ENCODE measurements at regions of chr17 and their contacts with region 1.

Region 1: GRCh38 chr17:77429919-77430752 is 289.4 kb downstream of the SEC14L1 start:
- DNase-seq: peak; percentile 83
- H3K4me3 Mint-ChIP-seq: no peak overlapping the region
- H3K27ac Mint-ChIP-seq: peak overlapping the region; percentile 60
- H3K4me1 Mint-ChIP-seq: peaks cover 94% of the 10 kb centered on the region
- H3K27me3 Mint-ChIP-seq: no peaks in the 10 kb centered on the region

Region 2: GRCh38 chr17:77287432-77288071 is 142.6 kb before region 1 on chr17:
- CTCF ChIA-PET with region 1: no interaction called
- POLR2A ChIA-PET with region 1: no interaction called
- DNase-seq: no peak
- H3K4me3 Mint-ChIP-seq: no peak overlapping the region
- H3K27ac Mint-ChIP-seq: no peak overlapping the region
- H3K4me1 Mint-ChIP-seq: peaks cover 5% of the 10 kb centered on the region
- H3K27me3 Mint-ChIP-seq: peaks cover 11% of the 10 kb centered on the region

Region 3: DNA sequence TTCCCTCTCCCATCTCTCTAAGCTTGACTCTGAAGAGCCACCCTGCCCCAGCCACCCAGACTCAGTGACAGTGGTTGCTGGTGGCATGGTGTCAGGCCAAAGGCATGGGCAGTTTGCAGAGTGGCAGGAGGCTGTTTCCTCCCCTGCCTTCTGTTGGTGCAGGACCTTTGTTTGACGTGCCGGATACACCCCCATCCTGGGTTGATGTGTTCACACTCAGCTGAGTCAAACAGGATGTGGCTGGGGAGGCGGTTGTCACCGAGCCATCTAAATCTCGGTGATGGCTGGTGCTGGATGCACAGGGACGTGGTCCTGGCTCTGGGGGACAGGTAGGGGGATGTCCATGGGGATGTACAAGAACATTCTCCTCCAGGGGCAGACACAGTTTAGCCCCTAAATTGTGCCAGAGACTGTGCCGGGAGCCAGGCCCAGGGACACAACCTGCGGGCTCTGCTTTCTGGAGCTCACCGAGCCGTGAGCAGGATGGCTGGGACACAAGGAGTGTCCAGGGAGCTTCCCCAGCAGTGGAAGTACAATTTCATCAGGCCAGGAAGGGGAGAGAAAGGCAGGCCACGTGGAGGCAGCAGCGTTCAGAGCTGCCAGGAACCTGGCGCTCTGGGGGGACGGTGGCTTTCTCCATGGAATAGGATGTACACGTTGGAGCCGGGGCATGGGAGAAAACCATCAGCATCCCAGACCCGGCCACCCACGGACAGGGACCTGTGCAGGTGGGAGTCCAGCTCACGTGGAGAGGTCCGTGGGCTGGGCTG is 25.1 kb before region 1 on chr17:
- CTCF ChIA-PET with region 1: interaction called, 14 read pairs
- POLR2A ChIA-PET with region 1: no interaction called
- DNase-seq: peak; percentile 90
- H3K4me3 Mint-ChIP-seq: peak overlapping the region; percentile 91
- H3K27ac Mint-ChIP-seq: peak overlapping the region; percentile 91
- H3K4me1 Mint-ChIP-seq: peaks cover 94% of the 10 kb centered on the region
- H3K27me3 Mint-ChIP-seq: no peaks in the 10 kb centered on the region

Region 4: DNA sequence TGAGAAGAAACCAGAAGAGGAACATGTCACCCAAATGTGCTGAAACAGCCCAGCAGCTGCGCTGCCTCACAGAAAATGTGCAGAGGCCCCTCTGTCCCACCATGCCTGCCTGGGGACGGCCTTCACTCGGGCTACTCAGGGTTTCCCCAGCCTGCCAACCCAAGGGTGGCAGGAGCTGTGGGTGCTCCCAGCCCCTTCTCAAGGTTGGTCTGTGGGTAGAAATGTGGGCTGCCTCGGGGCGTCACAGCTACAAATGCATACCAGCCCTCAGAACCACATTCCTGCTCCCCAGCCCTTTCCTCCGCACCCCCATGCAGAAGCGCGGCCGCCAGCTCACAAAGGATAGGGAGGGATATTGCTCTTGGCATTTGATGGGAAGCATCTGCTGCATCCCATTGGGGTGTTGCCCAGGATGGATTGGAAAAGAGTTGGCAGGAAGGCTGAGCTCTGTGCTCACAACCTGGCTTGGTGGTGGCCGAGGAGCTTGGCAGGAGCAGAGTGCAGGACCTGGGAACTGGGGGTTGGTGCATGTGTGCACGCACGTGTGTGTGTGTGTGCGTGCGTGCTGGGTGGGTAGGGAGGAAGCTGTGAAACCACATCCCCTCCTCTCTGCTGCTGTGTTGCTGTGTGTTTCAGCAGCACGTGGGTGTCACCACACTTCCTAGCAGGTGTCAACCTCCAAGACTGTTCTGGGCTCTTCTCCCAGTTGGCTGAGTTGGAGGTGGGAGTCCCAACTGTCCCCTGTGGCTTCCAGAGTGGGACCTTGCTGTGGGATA is 15.0 kb after region 1 on chr17:
- CTCF ChIA-PET with region 1: interaction called, 34 read pairs
- POLR2A ChIA-PET with region 1: interaction called, 4 read pairs
- DNase-seq: peak; percentile 92
- H3K4me3 Mint-ChIP-seq: peak overlapping the region; percentile 83
- H3K27ac Mint-ChIP-seq: peak overlapping the region; percentile 97
- H3K4me1 Mint-ChIP-seq: peaks cover 97% of the 10 kb centered on the region
- H3K27me3 Mint-ChIP-seq: no peaks in the 10 kb centered on the region

Region 5: DNA sequence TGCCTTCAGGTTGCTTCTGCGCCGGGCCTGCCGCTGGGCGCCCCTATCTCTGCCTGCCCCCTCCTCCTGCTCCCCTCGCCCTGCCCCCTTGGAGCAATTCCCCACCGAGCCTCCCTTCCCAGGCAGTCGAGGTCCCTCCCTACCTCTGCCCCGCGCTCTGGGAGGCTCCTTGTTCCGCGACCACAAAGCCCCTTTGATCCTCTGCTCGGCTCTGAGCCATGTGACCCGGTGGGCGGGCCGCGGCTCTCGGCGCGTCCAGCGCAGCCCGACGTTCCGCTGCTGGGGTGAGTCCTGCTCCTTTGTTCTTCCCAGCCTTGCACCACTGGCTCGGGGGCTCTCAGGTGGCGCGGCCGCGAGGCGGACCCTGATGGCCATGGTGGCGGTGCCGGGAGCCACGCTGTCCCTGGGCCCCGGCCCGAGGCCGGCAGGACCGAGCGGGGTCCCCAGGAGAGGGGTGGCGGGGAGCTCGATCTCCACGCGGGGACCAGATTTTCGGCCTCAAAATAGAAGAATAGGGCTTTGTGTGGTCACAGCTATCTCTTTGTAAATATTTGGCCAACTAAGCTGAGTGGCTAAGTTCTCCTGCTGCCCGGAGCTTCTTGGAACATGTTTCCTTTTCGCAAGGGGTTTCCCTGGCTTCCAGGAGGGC is 21.2 kb after region 1 on chr17:
- CTCF ChIA-PET with region 1: interaction called, 18 read pairs
- POLR2A ChIA-PET with region 1: no interaction called
- DNase-seq: peak; percentile 81
- H3K4me3 Mint-ChIP-seq: peak overlapping the region; percentile 95
- H3K27ac Mint-ChIP-seq: peak overlapping the region; percentile 98
- H3K4me1 Mint-ChIP-seq: peaks cover 56% of the 10 kb centered on the region
- H3K27me3 Mint-ChIP-seq: no peaks in the 10 kb centered on the region

Region 6: GRCh38 chr17:77462101-77462500 is 32.0 kb after region 1 on chr17:
- CTCF ChIA-PET with region 1: interaction called, 13 read pairs
- POLR2A ChIA-PET with region 1: interaction called, 4 read pairs
- DNase-seq: peak; percentile 69
- H3K4me3 Mint-ChIP-seq: peak overlapping the region; percentile 95
- H3K27ac Mint-ChIP-seq: peak overlapping the region; percentile 98
- H3K4me1 Mint-ChIP-seq: peaks cover 89% of the 10 kb centered on the region
- H3K27me3 Mint-ChIP-seq: no peaks in the 10 kb centered on the region

Region 7: DNA sequence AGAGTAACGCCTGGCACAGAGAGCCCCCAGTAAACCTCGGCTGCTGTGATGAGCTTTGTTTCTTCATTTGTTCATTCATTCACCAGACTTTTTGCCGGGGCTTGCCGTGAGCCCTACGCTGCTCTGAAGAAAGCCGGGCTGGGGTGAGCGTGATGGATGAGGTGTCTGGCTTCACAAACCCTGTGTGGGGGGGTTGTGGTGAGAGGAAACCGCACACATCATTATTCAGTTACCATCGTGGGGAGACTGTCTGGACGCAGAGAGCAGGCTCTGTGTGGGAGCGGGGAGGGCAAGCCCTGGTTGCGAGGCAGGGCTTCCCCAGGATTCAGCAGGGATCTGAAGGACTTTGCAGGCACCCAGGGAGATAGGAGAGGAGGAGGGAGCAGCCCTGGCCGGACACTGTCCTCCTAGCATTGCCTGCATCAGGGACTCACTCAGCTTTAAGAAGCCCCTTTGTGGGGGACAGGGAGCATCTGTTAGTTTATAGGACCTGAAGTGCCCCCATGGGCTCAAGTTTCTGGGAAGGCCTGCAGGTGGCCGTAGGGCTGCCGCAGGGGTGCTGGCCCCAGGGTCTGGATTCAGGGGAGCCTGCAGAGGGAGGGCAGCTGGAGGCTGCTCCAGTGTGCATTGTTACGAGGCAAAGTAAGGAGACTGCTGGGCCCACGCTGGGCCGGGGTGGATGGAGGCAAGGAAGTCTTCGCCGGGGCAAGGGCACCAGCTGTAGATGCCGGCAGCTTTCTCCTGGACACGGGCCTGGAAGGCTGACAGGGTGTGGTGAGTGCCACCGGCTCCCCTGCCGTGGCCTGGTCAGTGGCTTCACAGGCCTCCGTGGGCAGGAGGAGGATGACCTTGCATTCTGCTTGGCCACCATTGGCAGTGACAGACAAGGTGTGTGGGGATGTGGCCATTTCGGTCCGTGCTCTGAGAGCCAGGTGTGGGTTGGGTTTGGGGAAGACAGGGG is 45.2 kb after region 1 on chr17:
- CTCF ChIA-PET with region 1: interaction called, 10 read pairs
- POLR2A ChIA-PET with region 1: no interaction called
- DNase-seq: peak; percentile 56
- H3K4me3 Mint-ChIP-seq: peak overlapping the region; percentile 37
- H3K27ac Mint-ChIP-seq: peak overlapping the region; percentile 73
- H3K4me1 Mint-ChIP-seq: peaks cover 91% of the 10 kb centered on the region
- H3K27me3 Mint-ChIP-seq: no peaks in the 10 kb centered on the region

Region 8: GRCh38 chr17:77494664-77495435 is 64.7 kb after region 1 on chr17:
- CTCF ChIA-PET with region 1: interaction called, 17 read pairs
- POLR2A ChIA-PET with region 1: no interaction called
- DNase-seq: peak; percentile 74
- H3K4me3 Mint-ChIP-seq: no peak overlapping the region
- H3K27ac Mint-ChIP-seq: peak overlapping the region; percentile 72
- H3K4me1 Mint-ChIP-seq: peaks cover 30% of the 10 kb centered on the region
- H3K27me3 Mint-ChIP-seq: no peaks in the 10 kb centered on the region

Measured in activated CD4-positive, alpha-beta T cell treated with anti-CD3 and anti-CD28 coated beads, Interleukin-2, amount 10 ng/mL, durations not matched to agents 7 days and 5 days (primary cell).